Adrenal gland (tissue), 19 donors: ENCODE measurements at regions of chr9 and their contacts with region 1.

Region 1: DNA sequence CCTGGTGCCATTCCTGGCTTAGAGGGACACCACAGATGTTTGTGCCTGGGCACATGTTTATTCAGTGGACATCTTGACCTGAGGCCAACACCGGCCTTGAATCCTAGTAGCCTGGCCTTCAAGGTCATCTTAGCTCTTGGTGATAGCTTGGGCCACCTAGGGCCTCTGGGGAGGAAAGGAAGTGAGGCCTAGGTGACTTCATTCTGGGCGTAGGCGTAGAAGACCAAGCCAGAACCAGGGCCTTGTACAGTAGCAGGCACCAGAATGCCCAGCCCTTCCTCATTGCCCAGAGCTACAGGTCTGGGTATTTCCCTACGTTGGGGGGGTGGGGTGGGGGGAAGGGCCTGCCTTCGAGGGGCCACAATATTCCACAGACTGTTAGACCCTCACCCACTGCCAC is 33.8 kb downstream of the WNK2 start:
- DNase-seq: peak in 1 of 7 donors; percentile 11
- H3K4me3 ChIP-seq: no peak overlapping the region
- H3K27ac ChIP-seq: no peak overlapping the region
- H3K4me1 ChIP-seq: no peaks in the 10 kb centered on the region
- H3K27me3 ChIP-seq: no peaks in the 10 kb centered on the region
- CTCF ChIP-seq: no peak
- POLR2A ChIP-seq: no peak

Region 2: DNA sequence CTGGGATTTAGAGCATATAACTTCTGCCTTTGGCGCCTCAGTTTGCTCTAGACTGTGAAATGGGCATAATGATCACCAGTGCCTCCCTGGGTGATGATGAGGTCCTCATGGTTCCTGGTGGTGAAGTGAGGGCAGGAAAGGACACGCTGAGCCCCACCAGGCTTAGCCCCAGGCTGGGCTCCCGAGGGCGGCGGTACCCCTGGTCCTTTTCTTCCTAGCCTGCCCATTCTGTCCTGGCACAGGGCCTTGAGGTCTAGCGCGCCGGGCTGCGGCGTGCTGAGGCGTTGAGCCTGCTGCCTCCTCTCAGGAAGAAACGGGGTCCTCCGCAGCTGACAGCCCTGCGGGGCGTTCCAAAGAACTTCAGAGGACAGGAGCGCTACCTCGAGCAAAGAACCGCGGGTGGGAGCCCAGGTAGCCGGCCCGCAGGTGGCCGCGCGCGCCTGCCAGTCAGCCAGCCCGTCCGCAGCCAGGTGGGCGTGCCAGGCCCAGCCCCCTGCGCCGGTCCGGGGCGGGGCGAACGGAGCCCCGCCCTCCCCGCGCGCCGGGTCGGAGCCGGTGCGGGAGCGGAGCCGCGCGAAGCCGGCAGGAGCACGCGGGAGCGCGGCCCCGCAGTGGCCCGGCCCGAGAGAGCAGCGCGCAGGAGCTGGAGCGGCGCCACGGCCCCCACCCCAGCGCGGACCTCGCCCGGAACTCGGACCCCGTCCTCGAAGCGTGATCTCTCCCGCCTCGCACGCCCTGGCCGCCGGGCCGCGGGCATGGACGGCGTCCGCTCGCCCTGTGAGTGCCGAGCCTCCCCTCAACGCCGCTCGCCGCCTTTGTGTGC is 33.9 kb before region 1 on chr9 and contains the start of gene WNK2:
- intact Hi-C with region 1: no loop called
- DNase-seq: peak in 3 of 7 donors; percentile 22 to 45 (median 24)
- H3K4me3 ChIP-seq: peak within 1 kb of the TSS in 2 of 4 donors; percentile 22 to 80
- H3K27ac ChIP-seq: no peak within 1 kb of the TSS
- H3K4me1 ChIP-seq: peaks cover 6 to 11% of the 10 kb centered on the region in 2 donors
- H3K27me3 ChIP-seq: peaks cover 3% of the 10 kb centered on the region
- CTCF ChIP-seq: no peak
- POLR2A ChIP-seq: no peak
- total RNA-seq, gene WNK2: 1.1 to 14.9 (median 8.3) TPM

Region 3: DNA sequence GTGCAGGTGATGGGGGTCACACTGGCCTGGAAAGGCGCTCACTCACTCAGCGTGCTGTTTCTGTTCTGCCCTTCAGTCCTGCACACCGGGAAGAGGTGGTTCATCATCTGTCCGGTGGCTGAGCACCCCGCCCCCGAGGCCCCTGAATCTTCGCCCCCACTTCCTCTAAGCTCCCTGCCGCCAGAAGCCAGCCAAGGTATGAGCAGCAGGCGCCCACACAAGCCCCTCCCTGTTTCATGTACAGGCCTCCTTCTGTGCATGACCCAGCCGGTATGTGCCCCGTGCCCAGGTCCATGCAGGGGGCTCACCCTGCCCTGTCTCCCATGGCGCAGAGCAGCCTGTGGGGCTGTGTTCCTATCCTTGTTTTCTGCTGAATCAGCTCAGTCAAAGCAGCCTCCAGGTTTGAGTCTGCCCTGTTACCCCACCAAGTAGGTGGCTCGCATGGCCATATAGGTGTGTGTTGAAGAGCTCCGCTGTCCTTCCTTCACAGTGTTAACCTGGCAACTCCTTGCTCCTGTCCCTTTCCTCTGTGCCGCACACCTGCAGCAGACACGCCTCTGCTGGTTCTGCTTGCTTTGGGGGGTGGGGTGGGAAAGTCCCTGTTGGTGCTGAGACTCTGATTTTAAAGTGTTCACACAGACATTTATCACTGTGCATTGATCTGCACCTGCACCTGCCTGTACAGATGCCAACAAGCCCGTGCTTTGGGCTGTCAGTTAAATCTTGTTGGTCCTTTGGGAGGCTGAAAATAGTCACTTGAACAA is 51.0 kb after region 1 on chr9:
- intact Hi-C with region 1: loop called in 1 of 2 experiments (anchors 5 kb)
- DNase-seq: peak in 3 of 7 donors; percentile 5 to 9 (median 6)
- H3K4me3 ChIP-seq: no peak overlapping the region
- H3K27ac ChIP-seq: no peak overlapping the region
- H3K4me1 ChIP-seq: no peaks in the 10 kb centered on the region
- H3K27me3 ChIP-seq: no peaks in the 10 kb centered on the region
- CTCF ChIP-seq: no peak
- POLR2A ChIP-seq: no peak